ENCODE measurements at regions of chr2 and their contacts with region 1.

Region 1: DNA sequence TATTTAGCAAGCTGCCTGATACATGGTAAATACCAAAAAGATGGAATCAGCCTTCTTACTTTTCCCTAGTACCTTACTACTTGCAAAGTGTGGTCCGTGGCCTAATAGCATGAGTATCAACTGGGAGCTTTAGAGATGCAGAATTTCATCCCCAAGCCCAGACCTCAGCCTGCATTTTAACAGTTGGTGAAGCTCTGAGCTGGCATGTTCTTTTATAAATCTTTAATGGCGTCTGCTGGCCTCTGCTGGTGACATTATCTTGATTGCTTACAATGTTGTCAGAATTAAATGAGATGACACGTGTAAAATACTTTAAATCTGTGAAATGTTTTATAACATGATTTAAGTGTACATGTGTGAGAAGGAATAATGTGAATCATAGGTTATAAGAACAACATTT is 115.1 kb upstream of the NOSTRIN start:
- DNase-seq: no peak
- H3K4me3 Mint-ChIP-seq: no peak overlapping the region
- H3K27ac Mint-ChIP-seq: no peak overlapping the region
- H3K4me1 Mint-ChIP-seq: peaks cover 6% of the 10 kb centered on the region
- H3K27me3 Mint-ChIP-seq: no peaks in the 10 kb centered on the region

Region 2: DNA sequence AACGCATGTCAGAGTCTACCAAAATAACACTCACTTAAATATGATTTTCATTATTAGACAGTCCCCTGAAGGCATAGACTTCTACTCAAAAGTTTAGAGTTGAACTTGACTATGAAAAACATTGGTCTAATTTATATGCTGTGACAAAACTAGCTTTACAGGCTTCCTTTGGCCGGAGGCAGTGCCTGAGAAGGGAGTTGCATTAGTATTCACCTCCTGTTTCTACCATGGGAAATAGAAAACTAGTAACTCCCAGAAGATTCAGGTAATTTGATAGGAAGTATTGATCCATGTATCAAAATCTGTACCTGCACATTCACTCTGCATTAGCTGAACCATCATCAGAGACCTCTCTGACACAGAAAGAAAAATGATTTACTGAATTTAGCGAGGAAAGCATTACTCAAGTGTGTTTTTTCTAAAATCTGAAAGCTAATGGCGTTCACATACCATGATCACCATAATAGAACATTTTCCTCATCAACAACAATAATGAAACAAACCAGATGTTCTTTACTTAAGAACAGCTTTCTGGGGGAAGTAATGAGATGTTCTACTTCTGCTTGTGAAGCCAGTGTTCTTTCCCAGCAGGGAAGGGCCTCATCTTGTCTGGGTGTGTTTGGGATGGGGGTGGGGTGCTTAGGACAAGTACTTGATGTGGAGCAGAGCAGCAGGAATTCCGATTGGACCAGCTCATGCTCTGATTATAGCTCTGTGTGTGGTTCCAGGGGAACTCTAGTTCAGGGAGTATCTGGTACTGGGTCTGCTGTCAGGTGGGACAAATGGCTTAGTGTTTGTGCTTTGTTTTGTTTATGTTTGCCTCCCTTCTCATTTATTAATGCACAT is 48.0 kb before region 1 on chr2:
- CTCF ChIA-PET with region 1: no interaction called
- POLR2A ChIA-PET with region 1: no interaction called
- intact Hi-C with region 1: no loop called
- DNase-seq: no peak
- H3K4me3 Mint-ChIP-seq: no peak overlapping the region
- H3K27ac Mint-ChIP-seq: no peak overlapping the region
- H3K4me1 Mint-ChIP-seq: peaks cover 3% of the 10 kb centered on the region
- H3K27me3 Mint-ChIP-seq: no peaks in the 10 kb centered on the region

Region 3: DNA sequence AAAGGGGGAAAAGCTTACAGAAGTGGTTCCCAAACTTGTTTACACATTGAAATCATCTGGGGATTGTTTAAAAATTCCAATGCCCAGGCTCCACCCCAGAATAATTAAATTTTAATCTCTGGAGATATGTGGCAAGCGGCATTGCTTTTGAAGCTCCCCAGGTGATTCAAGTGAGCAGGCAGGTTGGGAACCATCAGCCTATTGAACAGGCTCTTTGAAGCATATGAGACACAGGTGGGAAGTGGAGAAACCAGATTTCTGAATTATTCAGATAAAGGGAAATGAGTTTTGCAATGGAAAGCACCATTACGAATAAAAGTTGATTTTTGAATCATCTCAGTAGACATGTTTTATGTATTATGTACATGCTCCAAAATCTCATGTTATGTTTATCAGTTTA is 57.5 kb after region 1 on chr2:
- CTCF ChIA-PET with region 1: no interaction called
- POLR2A ChIA-PET with region 1: no interaction called
- intact Hi-C with region 1: loop called (anchors 2 kb)
- DNase-seq: no peak
- H3K4me3 Mint-ChIP-seq: no peak overlapping the region
- H3K27ac Mint-ChIP-seq: no peak overlapping the region
- H3K4me1 Mint-ChIP-seq: peaks cover 17% of the 10 kb centered on the region
- H3K27me3 Mint-ChIP-seq: no peaks in the 10 kb centered on the region

Region 4: DNA sequence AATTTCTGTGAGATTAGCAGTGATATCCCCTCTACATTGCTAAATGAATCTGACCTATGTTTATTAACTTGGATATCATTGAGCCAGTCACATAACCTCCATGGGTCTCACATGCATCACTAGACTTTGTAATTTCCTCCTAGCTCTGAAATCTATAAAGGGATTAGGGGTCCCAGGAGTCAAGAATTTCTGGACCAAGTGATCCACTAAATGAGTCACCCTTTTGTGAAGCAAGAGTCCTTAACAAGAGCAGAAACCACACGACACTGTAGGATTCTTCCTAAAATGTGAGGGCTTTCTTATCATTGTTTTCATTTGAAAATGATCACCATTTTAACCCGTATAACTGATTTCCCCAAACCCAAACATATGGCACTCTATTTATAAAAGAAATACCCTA is 472.4 kb after region 1 on chr2:
- CTCF ChIA-PET with region 1: no interaction called
- POLR2A ChIA-PET with region 1: no interaction called
- intact Hi-C with region 1: no loop called
- DNase-seq: no peak
- H3K4me3 Mint-ChIP-seq: no peak overlapping the region
- H3K27ac Mint-ChIP-seq: no peak overlapping the region
- H3K4me1 Mint-ChIP-seq: no peaks in the 10 kb centered on the region
- H3K27me3 Mint-ChIP-seq: peaks cover 5% of the 10 kb centered on the region